ENCODE measurements at regions of chr13 and their contacts with region 1.

Region 1: DNA sequence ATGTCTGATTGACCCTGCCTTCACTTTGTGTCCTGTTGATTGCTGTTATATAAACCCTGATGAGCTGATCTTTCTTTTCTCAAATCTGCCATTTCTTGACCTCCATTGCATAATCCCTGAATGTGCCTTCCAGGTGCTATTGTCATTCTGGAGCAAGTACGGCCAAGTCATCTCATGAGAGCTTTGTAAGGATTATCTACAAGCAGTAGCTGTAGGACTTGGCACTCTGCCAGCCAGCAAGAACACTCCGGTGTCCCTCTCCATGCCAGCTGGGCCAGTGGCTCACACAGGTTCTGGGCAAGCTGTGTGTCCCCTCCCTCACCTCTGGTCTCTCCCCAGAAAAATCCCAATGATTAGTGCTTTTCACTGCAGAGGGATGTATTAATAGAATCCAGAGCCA is 348.1 kb downstream of the FOXO1 start:
- DNase-seq: no peak
- H3K4me3 Mint-ChIP-seq: no peak overlapping the region
- H3K27ac Mint-ChIP-seq: no peak overlapping the region
- H3K4me1 Mint-ChIP-seq: peaks cover 60% of the 10 kb centered on the region
- H3K27me3 Mint-ChIP-seq: no peaks in the 10 kb centered on the region

Region 2: GRCh38 chr13:40077396-40078027 is 240.9 kb before region 1 on chr13:
- CTCF ChIA-PET with region 1: no interaction called
- POLR2A ChIA-PET with region 1: no interaction called
- intact Hi-C with region 1: no loop called
- DNase-seq: no peak
- H3K4me3 Mint-ChIP-seq: no peak overlapping the region
- H3K27ac Mint-ChIP-seq: no peak overlapping the region
- H3K4me1 Mint-ChIP-seq: no peaks in the 10 kb centered on the region
- H3K27me3 Mint-ChIP-seq: no peaks in the 10 kb centered on the region

Region 3: DNA sequence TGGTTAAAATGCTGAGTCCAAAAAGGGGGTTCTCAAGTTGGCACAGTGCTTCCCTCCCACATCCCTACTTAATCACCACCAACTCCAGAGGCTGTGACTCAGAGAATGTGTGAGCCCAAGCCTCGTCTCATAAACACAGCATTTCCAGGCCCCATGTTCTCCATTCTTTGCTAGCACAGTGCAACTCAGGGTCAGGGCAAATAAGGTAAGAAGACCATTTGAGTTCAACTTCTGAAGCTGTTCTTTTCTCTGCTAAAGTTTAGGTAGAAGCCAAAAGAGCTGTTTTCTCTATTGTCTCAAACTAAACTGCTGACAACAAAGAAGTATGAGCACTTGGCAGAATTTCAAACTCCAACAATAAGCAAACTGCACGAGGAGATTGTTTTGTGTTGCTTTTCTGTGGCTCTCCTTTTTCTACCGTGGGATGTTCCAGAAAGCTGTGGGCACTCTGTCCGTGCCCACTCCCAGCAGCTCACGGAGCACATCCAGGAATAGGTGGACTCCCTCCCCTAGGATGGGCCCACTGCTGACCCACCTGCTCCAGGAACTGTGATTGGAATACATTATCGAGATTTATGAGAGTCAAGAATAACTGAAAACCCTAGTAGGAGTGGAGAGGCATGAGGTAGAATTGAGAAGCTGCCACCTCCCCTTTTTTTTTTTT is 168.6 kb before region 1 on chr13:
- CTCF ChIA-PET with region 1: interaction called, 4 read pairs
- POLR2A ChIA-PET with region 1: no interaction called
- intact Hi-C with region 1: loop called (anchors 5 kb)
- DNase-seq: no peak
- H3K4me3 Mint-ChIP-seq: no peak overlapping the region
- H3K27ac Mint-ChIP-seq: peak overlapping the region; percentile 18
- H3K4me1 Mint-ChIP-seq: peaks cover 62% of the 10 kb centered on the region
- H3K27me3 Mint-ChIP-seq: no peaks in the 10 kb centered on the region

Region 4: DNA sequence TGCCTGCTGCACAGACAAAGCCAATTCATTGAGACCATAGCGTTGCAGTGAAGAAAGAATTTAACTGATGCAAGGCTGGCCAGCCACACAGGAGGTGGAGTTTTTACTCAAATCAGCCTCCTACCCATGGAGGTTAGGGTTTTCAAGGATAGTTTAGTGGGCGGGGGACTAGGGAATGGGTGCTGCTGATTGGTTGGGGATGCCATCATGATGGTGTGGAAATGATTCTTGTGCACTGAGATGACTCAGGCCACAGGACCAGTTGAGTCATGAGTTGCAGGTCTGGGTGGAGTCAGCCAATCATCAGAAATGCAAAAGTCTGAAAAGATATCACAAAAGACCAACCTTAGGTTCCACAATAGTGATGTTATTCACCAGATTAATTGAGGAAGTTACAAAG is 11.5 kb before region 1 on chr13:
- CTCF ChIA-PET with region 1: interaction called, 4 read pairs
- POLR2A ChIA-PET with region 1: no interaction called
- intact Hi-C with region 1: loop called (anchors 1 kb)
- DNase-seq: peak; percentile 85
- H3K4me3 Mint-ChIP-seq: peak overlapping the region; percentile 32
- H3K27ac Mint-ChIP-seq: peak overlapping the region; percentile 70
- H3K4me1 Mint-ChIP-seq: peaks cover 24% of the 10 kb centered on the region
- H3K27me3 Mint-ChIP-seq: no peaks in the 10 kb centered on the region

Region 5: DNA sequence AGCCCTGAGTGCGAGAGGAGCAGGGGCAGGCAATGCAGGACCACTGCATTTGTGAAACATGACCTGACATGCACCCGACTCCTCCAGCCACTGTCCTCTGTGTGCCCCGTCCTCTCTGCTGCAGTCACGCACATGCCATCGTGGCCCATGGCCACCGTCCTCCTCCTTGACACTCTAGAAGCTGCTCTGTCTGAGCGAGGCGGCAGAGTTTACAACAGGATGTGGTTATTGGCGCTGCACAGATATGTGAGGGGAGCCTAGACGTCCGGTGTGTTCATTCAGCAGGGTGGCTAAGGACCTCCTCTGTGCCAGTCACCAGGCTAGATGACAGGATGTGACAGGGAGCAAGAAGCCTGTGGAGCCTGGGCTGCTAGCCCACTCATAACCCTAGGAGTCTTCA is 70.3 kb after region 1 on chr13:
- CTCF ChIA-PET with region 1: no interaction called
- POLR2A ChIA-PET with region 1: interaction called, 3 read pairs
- intact Hi-C with region 1: loop called (anchors 2 kb)
- DNase-seq: peak; percentile 92
- H3K4me3 Mint-ChIP-seq: peak overlapping the region; percentile 68
- H3K27ac Mint-ChIP-seq: peak overlapping the region; percentile 94
- H3K4me1 Mint-ChIP-seq: peaks cover 29% of the 10 kb centered on the region
- H3K27me3 Mint-ChIP-seq: no peaks in the 10 kb centered on the region

Region 6: GRCh38 chr13:40597740-40598370 is 279.5 kb after region 1 on chr13:
- CTCF ChIA-PET with region 1: no interaction called
- POLR2A ChIA-PET with region 1: no interaction called
- intact Hi-C with region 1: loop called (anchors 5 kb)
- DNase-seq: peak; percentile 24
- H3K4me3 Mint-ChIP-seq: peak overlapping the region; percentile 39
- H3K27ac Mint-ChIP-seq: peak overlapping the region; percentile 85
- H3K4me1 Mint-ChIP-seq: peaks cover 87% of the 10 kb centered on the region
- H3K27me3 Mint-ChIP-seq: no peaks in the 10 kb centered on the region

Measured in activated CD4-positive, alpha-beta memory T cell treated with anti-CD3 and anti-CD28 coated beads for 36 hours (primary cell).